T-cell (primary cell): ENCODE measurements at regions of chr11 and their contacts with region 1.

Region 1: GRCh38 chr11:122697636-122698167 is 42.2 kb downstream of the UBASH3B start:
- DNase-seq: peak in 34 of 35 experiments; percentile 22 to 68 (median 44)
- ATAC-seq: peak; percentile 75 to 83 (median 79)
- H3K4me3 ChIP-seq: peak overlapping the region in 1 of 2 donors; percentile 2
- H3K4me3 Mint-ChIP-seq: peak overlapping the region; percentile 62 to 70 (median 64)
- H3K27ac ChIP-seq: peak overlapping the region; percentile 91
- H3K27ac Mint-ChIP-seq: peak overlapping the region; percentile 95 to 97
- H3K4me1 ChIP-seq: peaks cover 29 to 80% of the 10 kb centered on the region in 2 experiments
- H3K4me1 Mint-ChIP-seq: peaks cover 88 to 92% (median 91%) of the 10 kb centered on the region in 3 donors
- H3K27me3 ChIP-seq: no peaks in the 10 kb centered on the region
- H3K27me3 Mint-ChIP-seq: no peaks in the 10 kb centered on the region

Region 2: GRCh38 chr11:121191818-121192217 is 1505.9 kb before region 1 on chr11:
- CTCF ChIA-PET with region 1: interaction called in 1 of 2 experiments, 10 read pairs
- POLR2A ChIA-PET with region 1: no interaction called
- DNase-seq: no peak
- ATAC-seq: no peak
- H3K4me3 ChIP-seq: no peak overlapping the region
- H3K4me3 Mint-ChIP-seq: no peak overlapping the region
- H3K27ac ChIP-seq: no peak overlapping the region
- H3K27ac Mint-ChIP-seq: no peak overlapping the region
- H3K4me1 ChIP-seq: peaks cover 0 to 2% of the 10 kb centered on the region in 2 experiments
- H3K4me1 Mint-ChIP-seq: peaks cover 0 to 7% (median 3%) of the 10 kb centered on the region in 3 donors
- H3K27me3 ChIP-seq: peaks cover 0 to 5% of the 10 kb centered on the region in 2 experiments
- H3K27me3 Mint-ChIP-seq: peaks cover 25 to 30% of the 10 kb centered on the region in 2 donors

Region 3: DNA sequence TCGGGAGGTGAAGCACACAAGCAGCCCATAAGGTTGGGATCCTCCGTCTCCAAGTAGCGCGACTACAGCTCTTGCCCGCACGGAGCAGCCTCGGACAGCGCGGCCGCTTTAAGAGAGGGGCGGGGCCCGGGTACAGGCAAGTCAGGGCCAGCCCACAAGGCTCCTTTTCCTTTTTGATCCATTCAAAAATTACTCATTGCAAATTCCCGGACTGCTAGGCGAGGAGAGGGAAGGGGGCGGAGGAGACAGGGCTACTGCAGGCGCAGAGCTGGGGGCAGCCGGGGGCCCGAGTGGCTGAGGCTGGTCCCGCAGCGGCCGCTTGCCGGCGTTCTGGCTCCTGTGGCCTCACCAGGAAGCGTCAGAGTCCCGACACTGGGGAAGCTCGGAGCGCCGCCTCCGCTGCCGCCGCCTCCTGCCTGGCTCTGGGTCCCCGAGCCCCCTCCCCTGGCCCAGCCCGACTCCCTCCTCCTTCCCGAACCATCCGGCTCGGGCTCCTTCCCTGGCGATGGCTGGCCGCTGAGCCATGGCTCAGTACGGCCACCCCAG is 42.1 kb before region 1 on chr11 and contains the start of gene UBASH3B:
- CTCF ChIA-PET with region 1: interaction called, 3 to 7 read pairs
- POLR2A ChIA-PET with region 1: interaction called, 4 to 11 read pairs
- DNase-seq: peak in 34 of 35 experiments; percentile 28 to 66 (median 48)
- ATAC-seq: peak; percentile 77 to 80 (median 78)
- H3K4me3 ChIP-seq: peak within 1 kb of the TSS; percentile 85
- H3K4me3 Mint-ChIP-seq: peak within 1 kb of the TSS; percentile 93 to 97 (median 97)
- H3K27ac ChIP-seq: peak within 1 kb of the TSS; percentile 46
- H3K27ac Mint-ChIP-seq: peak within 1 kb of the TSS; percentile 92 to 94
- H3K4me1 ChIP-seq: peaks cover 4 to 35% of the 10 kb centered on the region in 2 experiments
- H3K4me1 Mint-ChIP-seq: peaks cover 44 to 52% (median 50%) of the 10 kb centered on the region in 3 donors
- H3K27me3 ChIP-seq: peaks cover 0 to 8% of the 10 kb centered on the region in 2 experiments
- H3K27me3 Mint-ChIP-seq: no peaks in the 10 kb centered on the region
- total RNA-seq, gene UBASH3B: 29.7 to 44.0 (median 36.8) TPM